Transverse colon (tissue), 4 donors: ENCODE measurements at regions of chr13 and their contacts with region 1.

Region 1: DNA sequence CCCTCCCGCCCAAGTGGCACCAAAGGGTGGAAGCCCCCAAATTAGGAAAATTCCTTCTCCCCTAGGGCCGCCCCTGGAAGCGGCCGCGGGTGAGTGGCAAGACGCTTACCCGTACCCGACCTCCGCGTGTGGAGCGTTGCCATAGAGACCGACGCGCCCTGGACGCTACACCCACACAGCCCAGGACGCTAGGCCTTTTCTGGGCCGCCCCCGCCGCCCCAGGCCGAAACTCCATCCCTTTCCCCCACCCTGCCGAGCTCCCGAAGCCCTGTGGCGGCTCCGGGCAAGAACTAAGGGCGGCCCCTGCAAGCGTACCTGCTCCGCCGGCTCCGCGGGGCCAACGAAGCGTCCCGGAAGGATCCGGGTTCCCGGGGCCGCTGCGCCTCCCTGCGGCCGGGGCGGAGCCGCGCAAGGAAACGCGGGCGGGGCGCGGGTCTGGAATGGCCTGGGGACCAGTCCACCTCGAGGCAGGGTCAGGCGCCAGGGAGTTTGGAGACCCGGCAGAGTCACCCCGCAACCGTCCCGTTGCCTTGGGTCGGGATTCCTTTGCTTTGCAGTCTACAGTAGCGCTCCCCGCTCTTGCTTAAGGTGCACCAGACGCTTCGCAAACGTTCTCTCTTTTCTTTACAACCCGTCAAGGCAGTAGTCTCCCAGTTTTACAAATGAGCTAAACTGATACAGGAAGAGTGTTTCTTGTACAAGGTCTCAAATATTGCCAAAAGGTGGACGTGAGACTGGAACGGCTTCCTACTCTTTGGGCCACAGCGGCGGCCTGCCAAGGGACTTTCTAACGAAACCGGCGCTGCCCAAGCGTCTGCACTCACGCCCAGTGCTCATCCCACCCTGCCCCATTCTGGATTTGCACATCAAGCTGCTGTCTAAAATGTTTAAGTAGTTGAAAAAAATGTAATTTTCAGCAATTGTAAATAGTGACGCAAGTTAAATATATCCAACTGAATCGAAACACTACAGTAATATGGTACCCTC is at the start of gene NEK5:
- DNase-seq: peak; percentile 72
- H3K4me3 ChIP-seq: peak within 1 kb of the TSS; percentile 48 to 91 (median 57)
- H3K27ac ChIP-seq: peak within 1 kb of the TSS; percentile 31 to 65 (median 44)
- H3K4me1 ChIP-seq: peaks cover 0 to 20% (median 9%) of the 10 kb centered on the region in 4 donors
- H3K27me3 ChIP-seq: no peaks in the 10 kb centered on the region
- CTCF ChIP-seq: peak; percentile 71 to 82 (median 80)
- EP300 ChIP-seq: no peak
- POLR2A ChIP-seq: no peak
- total RNA-seq, gene NEK5: 0.14 to 0.48 TPM in 2 of 4 donors, not detected in the others

Region 2: DNA sequence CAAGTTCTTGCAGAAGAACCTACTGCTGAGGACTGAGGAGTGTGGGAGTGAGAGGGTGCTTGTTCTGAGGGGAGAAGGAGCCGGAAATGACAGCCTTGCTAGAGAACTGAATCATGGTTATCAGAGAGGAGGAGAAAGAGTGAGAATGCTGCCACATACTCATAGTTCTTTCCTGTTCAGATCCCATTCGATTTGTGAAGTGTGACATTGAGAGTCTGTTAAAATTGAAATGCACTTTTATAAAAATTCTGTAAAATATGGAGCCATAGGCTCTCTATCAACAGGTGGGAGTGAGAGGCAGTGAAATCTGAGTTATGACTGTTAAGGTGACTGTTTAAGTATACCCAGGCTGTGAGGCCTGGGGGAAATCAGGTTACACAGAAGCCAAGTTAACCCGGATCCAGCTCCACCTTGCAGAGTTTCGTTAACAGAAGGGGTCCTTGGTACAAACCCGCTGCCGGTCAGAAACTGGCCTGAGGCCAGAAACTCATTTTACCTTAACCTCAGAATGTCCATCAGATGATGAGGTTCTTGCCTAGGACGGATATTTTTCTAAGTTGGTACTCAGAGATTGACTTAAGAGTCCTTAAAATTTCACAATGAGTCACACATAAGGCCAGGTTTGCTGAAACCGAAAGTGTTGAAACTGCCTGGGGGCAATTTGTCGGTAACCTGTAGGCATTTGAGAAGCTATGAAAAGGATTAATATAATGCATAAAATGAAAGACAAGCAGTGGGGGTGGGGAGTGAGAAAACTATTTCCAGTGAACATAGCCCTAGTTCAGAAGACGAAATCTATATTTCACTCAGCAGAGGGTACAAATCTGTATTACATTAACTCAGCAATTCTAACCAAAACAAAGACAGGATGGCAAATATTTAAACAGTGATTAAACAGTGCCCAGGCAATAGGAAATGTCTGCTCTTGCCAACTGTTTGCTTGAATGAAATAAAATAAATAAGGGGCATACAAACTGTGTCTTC is 1763.3 kb before region 1 on chr13:
- in situ Hi-C with region 1: no loop called
- intact Hi-C with region 1: no loop called
- DNase-seq: peak; percentile 23
- H3K4me3 ChIP-seq: peak overlapping the region in 1 of 4 donors; percentile 31
- H3K27ac ChIP-seq: peak overlapping the region; percentile 7 to 49 (median 41)
- H3K4me1 ChIP-seq: peaks cover 2 to 15% (median 5%) of the 10 kb centered on the region in 4 donors
- H3K27me3 ChIP-seq: no peaks in the 10 kb centered on the region
- CTCF ChIP-seq: no peak
- EP300 ChIP-seq: no peak
- POLR2A ChIP-seq: no peak

Region 3: GRCh38 chr13:51435002-51435578 is 693.9 kb before region 1 on chr13:
- in situ Hi-C with region 1: loop called in 1 of 4 experiments (anchors 25 kb)
- intact Hi-C with region 1: no loop called
- DNase-seq: no peak
- H3K4me3 ChIP-seq: no peak overlapping the region
- H3K27ac ChIP-seq: no peak overlapping the region
- H3K4me1 ChIP-seq: peaks cover 0 to 5% (median 0%) of the 10 kb centered on the region in 4 donors
- H3K27me3 ChIP-seq: no peaks in the 10 kb centered on the region
- CTCF ChIP-seq: peak; percentile 44 to 52 (median 47)
- EP300 ChIP-seq: no peak
- POLR2A ChIP-seq: no peak

Region 4: DNA sequence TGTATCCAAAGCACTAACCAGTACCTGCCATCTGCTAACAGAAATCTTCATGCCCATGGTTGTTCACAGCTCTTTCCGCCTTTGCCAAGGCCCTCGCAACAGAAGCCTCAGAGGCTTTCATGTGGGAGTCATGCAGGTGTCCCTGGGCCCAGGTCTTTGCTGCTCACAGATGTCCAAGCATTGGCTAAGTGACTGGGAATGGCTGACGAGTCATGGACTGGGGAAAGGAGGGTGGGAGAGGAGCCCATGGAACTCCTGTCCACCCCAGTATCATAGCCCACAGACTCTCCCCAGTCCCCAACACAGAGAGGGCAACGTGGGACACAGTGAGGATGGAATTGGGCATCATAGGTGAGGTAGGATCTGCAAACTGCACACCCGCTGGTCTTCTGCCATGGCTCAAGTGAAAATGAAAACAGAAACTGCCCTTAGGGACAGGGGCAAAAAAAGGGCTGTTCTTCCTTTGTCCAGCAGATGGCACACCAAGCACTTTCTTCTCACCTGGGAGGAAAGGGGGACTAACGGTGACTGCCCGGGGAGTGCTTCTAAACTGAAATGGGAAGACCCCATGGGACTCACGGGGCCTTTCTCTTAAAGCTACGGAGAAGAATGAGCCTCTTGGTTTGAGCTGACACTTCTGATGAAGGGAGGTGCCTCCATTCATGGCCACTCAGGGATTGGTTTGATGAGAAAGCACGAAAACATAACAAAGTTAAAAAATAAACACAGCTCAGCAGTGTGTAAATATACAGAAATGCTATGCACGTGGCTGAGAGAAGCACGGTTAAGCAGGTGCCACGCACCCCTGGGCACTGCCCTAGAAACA is 314.0 kb before region 1 on chr13:
- in situ Hi-C with region 1: loop called in 1 of 4 experiments (anchors 25 kb)
- intact Hi-C with region 1: no loop called
- DNase-seq: peak; percentile 83
- H3K4me3 ChIP-seq: peak overlapping the region in 1 of 4 donors; percentile 12
- H3K27ac ChIP-seq: peak overlapping the region in 1 of 4 donors; percentile 46
- H3K4me1 ChIP-seq: peaks cover 5 to 13% (median 10%) of the 10 kb centered on the region in 4 donors
- H3K27me3 ChIP-seq: no peaks in the 10 kb centered on the region
- CTCF ChIP-seq: peak; percentile 80 to 85 (median 82)
- EP300 ChIP-seq: no peak
- POLR2A ChIP-seq: no peak

Region 5: DNA sequence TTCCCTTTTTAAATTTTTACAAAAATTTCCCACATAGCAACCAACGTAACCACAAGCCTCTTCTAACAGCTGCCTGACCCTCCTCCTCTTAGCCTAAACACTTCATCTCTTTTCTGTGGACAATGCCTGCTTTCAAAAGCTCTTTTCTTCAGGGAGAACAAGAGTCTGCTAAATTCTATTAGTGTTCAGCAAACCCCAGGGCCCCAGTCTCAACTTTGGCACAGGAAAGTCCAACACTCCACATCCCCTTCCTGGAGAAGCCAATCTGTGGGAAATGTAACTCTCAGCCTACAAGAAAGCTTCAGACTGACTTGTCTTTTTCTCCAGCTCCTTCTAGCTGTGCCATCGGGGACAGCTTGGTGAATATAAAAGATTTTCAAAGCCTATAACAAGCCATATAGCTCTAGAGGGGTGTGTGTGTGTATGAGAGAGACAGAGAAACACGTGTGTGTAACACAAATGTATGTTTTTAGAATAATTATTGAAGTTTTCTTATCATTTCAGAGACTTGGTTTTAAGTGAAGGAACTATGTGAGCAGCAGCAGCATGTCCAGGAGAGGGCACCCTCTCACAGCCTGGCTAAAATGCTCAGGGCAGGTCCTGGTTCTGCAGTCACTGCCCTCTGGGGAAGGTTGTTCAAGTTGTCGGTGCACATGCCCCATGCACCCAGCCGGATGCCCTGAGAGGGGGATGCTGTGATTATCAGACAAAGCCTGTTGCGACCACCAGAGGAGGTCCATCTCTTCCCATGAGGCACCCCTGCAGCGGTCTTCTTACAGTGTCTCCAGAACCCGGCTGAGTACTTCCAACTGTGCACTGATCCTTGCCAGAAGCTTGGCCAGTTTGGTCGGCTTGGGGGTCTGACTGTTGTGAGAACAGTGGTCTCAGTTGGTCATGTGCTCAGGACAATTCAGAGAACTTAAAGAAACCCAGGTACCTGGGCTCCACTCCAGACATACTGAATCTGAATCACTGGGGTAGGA is 232.8 kb before region 1 on chr13:
- in situ Hi-C with region 1: loop called in 1 of 4 experiments (anchors 10 kb)
- intact Hi-C with region 1: no loop called
- DNase-seq: peak; percentile 57
- H3K4me3 ChIP-seq: no peak overlapping the region
- H3K27ac ChIP-seq: no peak overlapping the region
- H3K4me1 ChIP-seq: no peaks in the 10 kb centered on the region
- H3K27me3 ChIP-seq: no peaks in the 10 kb centered on the region
- CTCF ChIP-seq: peak; percentile 50 to 62 (median 53)
- EP300 ChIP-seq: no peak
- POLR2A ChIP-seq: no peak

Region 6: DNA sequence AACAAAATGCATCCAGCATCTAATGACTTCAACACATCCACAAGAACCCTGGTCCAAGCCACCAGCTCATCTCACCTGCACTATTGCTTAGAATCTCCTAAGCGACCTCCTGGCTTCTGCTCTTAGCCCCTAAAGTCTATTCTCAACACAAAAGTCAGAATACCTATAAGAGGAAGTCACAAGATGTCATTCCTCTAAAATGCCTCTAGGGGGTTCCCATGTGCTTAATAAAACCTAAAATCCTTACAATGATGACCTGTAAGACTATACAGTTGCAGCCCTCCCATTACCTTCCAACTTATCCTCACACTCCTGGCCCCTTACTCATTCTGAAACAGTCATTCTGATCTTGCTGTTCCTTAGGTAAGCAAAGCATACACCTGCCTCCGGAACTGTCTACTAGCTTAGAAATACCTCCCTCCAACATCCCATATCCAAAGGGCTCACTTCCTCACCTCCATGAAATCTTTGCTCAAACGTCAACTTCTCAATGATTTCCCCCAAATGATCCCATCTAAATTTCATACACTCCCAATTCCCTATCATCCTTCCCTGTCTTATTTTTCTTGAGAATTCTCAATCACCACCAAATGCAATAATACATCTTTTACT is 127.8 kb before region 1 on chr13:
- in situ Hi-C with region 1: loop called in 2 of 4 experiments (anchors 10 kb)
- intact Hi-C with region 1: loop called (anchors 10 kb)
- DNase-seq: no peak
- H3K4me3 ChIP-seq: no peak overlapping the region
- H3K27ac ChIP-seq: no peak overlapping the region
- H3K4me1 ChIP-seq: peaks cover 3 to 30% (median 16%) of the 10 kb centered on the region in 4 donors
- H3K27me3 ChIP-seq: no peaks in the 10 kb centered on the region
- CTCF ChIP-seq: peak; percentile 58 to 74 (median 70)
- EP300 ChIP-seq: no peak
- POLR2A ChIP-seq: no peak

Region 7: GRCh38 chr13:52085421-52085820 is 43.6 kb before region 1 on chr13:
- in situ Hi-C with region 1: no loop called
- intact Hi-C with region 1: no loop called
- DNase-seq: no peak
- H3K4me3 ChIP-seq: no peak overlapping the region
- H3K27ac ChIP-seq: no peak overlapping the region
- H3K4me1 ChIP-seq: no peaks in the 10 kb centered on the region
- H3K27me3 ChIP-seq: no peaks in the 10 kb centered on the region
- CTCF ChIP-seq: no peak
- EP300 ChIP-seq: no peak
- POLR2A ChIP-seq: no peak